H1 (cell line): ENCODE measurements at regions of chr15 and their contacts with region 1.

Region 1: GRCh38 chr15:39580117-39580484 is 778 bp upstream of the THBS1 start:
- DNase-seq: peak; percentile 71 to 99
- H3K4me3 ChIP-seq: peak overlapping the region; percentile 58 to 81 (median 79)
- H3K27ac ChIP-seq: peak overlapping the region; percentile 87; the same call in 1 of the 2 replicates
- H3K4me1 ChIP-seq: peaks cover 9 to 24% (median 11%) of the 10 kb centered on the region in 4 experiments
- H3K27me3 ChIP-seq: peaks cover 0 to 5% (median 0%) of the 10 kb centered on the region in 4 experiments; a peak in 2 of 7 replicates
- CTCF ChIP-seq: peak; percentile 77 to 99 (median 79)
- EP300 ChIP-seq: no peak
- POLR2A ChIP-seq: peak; percentile 28 to 44; a peak in 2 of 3 replicates
- RAD21 ChIP-seq: peak; percentile 85 to 90

Region 2: GRCh38 chr15:38886315-38887171 is 693.6 kb before region 1 on chr15:
- CTCF ChIA-PET with region 1: no interaction called
- POLR2A ChIA-PET with region 1: no interaction called
- DNase-seq: no peak
- H3K4me3 ChIP-seq: no peak overlapping the region
- H3K27ac ChIP-seq: no peak overlapping the region
- H3K4me1 ChIP-seq: no peaks in the 10 kb centered on the region
- H3K27me3 ChIP-seq: no peaks in the 10 kb centered on the region
- CTCF ChIP-seq: no peak
- EP300 ChIP-seq: no peak
- POLR2A ChIP-seq: no peak
- RAD21 ChIP-seq: no peak

Region 3: DNA sequence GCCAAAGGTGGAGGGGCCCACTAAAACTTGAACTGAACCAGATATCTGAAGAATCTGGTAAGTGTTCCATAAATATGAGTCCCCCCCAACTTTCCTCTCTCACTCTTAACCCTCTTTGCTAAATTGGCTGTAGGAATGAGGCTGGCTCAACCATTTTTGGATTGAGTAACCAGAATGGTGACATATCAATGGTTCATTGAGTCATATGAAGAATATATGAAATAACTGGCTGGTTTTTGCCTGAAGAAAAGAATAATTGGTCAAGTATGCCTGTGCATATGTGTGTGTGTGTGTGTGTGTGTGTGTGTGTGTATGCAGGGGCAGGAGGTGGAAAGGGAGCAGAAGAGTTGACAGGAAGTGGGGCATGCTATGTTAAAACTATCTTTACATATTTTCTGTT is 472.1 kb before region 1 on chr15:
- CTCF ChIA-PET with region 1: no interaction called
- POLR2A ChIA-PET with region 1: no interaction called
- DNase-seq: no peak
- H3K4me3 ChIP-seq: no peak overlapping the region
- H3K27ac ChIP-seq: no peak overlapping the region
- H3K4me1 ChIP-seq: no peaks in the 10 kb centered on the region
- H3K27me3 ChIP-seq: no peaks in the 10 kb centered on the region
- CTCF ChIP-seq: no peak
- EP300 ChIP-seq: no peak
- POLR2A ChIP-seq: no peak
- RAD21 ChIP-seq: no peak

Region 4: DNA sequence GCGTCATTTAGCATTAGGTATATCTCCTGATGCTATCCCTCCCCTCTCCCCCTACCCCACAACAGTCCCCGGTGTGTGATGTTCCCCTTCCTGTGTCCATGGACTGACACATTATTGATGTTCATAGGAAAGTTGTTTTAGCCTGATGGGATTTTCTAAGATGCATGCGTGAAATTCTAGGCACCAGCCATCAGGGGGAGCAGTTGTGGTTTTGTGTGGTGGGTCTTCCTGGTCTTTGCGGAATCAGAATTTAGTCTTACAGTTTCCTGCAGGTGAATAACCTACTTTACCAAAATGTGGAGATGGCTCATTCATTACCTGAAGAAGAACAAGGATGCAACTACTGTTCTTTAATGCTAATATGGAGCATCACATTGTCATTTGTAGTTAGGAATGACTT is 454.2 kb before region 1 on chr15:
- CTCF ChIA-PET with region 1: interaction called, 11 read pairs
- POLR2A ChIA-PET with region 1: interaction called, 15 read pairs
- DNase-seq: peak in 1 of 2 experiments; percentile 54
- H3K4me3 ChIP-seq: no peak overlapping the region
- H3K27ac ChIP-seq: no peak overlapping the region
- H3K4me1 ChIP-seq: peaks cover 0 to 6% (median 3%) of the 10 kb centered on the region in 4 experiments; a peak in 5 of 7 replicates
- H3K27me3 ChIP-seq: no peaks in the 10 kb centered on the region
- CTCF ChIP-seq: peak; percentile 53 to 81 (median 59)
- EP300 ChIP-seq: no peak
- POLR2A ChIP-seq: no peak
- RAD21 ChIP-seq: peak; percentile 75 to 78

Region 5: GRCh38 chr15:39312984-39313383 is 267.1 kb before region 1 on chr15:
- CTCF ChIA-PET with region 1: interaction called, 13 read pairs
- POLR2A ChIA-PET with region 1: interaction called, 10 read pairs
- DNase-seq: peak in 1 of 2 experiments; percentile 9
- H3K4me3 ChIP-seq: no peak overlapping the region
- H3K27ac ChIP-seq: no peak overlapping the region
- H3K4me1 ChIP-seq: no peaks in the 10 kb centered on the region
- H3K27me3 ChIP-seq: peaks cover 0 to 1% (median 0%) of the 10 kb centered on the region in 4 experiments; a peak in 1 of 7 replicates
- CTCF ChIP-seq: peak; percentile 33 to 46 (median 42); a peak in 3 of 4 replicates
- EP300 ChIP-seq: no peak
- POLR2A ChIP-seq: no peak
- RAD21 ChIP-seq: peak; percentile 70 to 74

Region 6: GRCh38 chr15:39530466-39531342 is 49.4 kb before region 1 on chr15:
- CTCF ChIA-PET with region 1: interaction called, 18 read pairs
- POLR2A ChIA-PET with region 1: interaction called, 14 read pairs
- DNase-seq: peak in 1 of 2 experiments; percentile 5
- H3K4me3 ChIP-seq: no peak overlapping the region; a peak in 1 of 8 replicates
- H3K27ac ChIP-seq: no peak overlapping the region
- H3K4me1 ChIP-seq: peaks cover 0 to 7% (median 3%) of the 10 kb centered on the region in 4 experiments; a peak in 4 of 7 replicates
- H3K27me3 ChIP-seq: peaks cover 0 to 2% (median 0%) of the 10 kb centered on the region in 4 experiments; a peak in 1 of 7 replicates
- CTCF ChIP-seq: no peak
- EP300 ChIP-seq: no peak
- POLR2A ChIP-seq: 0 out of 3 replicates have a peak, but pooled peaks of 1 of the 2 experiments have one; percentile 23
- RAD21 ChIP-seq: no peak

Region 7: GRCh38 chr15:39594056-39594763 is 14.1 kb after region 1 on chr15:
- CTCF ChIA-PET with region 1: interaction called, 15 read pairs
- POLR2A ChIA-PET with region 1: interaction called, 117 read pairs
- DNase-seq: no peak
- H3K4me3 ChIP-seq: no peak overlapping the region
- H3K27ac ChIP-seq: no peak overlapping the region
- H3K4me1 ChIP-seq: no peaks in the 10 kb centered on the region; a peak in 1 of 7 replicates
- H3K27me3 ChIP-seq: no peaks in the 10 kb centered on the region
- CTCF ChIP-seq: no peak
- EP300 ChIP-seq: no peak
- POLR2A ChIP-seq: no peak
- RAD21 ChIP-seq: no peak; a peak in 1 of 4 replicates

Region 8: GRCh38 chr15:39756806-39757522 is 176.9 kb after region 1 on chr15:
- CTCF ChIA-PET with region 1: interaction called, 5 read pairs
- POLR2A ChIA-PET with region 1: interaction called, 10 read pairs
- DNase-seq: no peak
- H3K4me3 ChIP-seq: no peak overlapping the region
- H3K27ac ChIP-seq: no peak overlapping the region
- H3K4me1 ChIP-seq: no peaks in the 10 kb centered on the region
- H3K27me3 ChIP-seq: no peaks in the 10 kb centered on the region
- CTCF ChIP-seq: peak in 2 of 3 experiments; percentile 46 to 57; a peak in 2 of 4 replicates
- EP300 ChIP-seq: no peak
- POLR2A ChIP-seq: no peak
- RAD21 ChIP-seq: peak; percentile 71 to 78